ENCODE measurements at regions of chr17 and their contacts with region 1.

Region 1: DNA sequence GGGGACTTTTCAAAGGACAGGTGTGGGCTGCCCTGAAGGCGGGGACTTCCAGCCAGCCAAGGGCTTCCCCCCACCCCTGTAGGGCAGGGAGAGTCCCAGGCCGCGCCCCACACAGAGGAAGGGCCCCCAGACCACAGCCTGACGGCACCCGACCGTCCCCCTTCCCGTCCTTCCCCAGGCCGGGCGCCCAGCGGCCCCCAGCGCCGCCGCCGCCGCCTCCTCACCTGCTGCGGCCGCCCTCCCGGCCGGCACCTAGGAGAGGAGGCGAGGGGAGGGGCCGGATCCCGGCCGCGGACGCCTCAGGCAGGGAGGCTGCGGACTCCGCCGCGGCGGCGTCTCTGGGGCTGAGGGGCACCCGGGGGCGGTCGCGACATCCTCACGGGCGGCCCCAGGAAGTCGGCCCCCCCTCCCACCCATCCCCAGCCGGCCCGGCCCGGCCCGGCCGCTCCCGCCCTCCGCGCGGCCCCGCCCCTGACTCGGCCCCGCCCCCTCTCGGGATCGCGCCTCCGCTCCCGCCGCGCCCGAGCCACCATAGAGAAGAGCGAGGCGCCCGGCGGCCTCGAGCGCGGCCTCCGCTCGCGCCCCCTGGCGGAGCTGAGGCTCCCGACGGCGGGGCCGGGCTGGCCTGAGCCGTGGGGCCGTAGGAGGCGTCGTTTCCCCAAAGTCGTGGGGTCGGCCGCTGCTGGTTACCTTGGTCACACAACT is 25.5 kb upstream of the RFFL start:
- DNase-seq: peak; percentile 93
- ATAC-seq: peak; percentile 80
- H3K4me3 Mint-ChIP-seq: peak overlapping the region; percentile 90
- H3K27ac Mint-ChIP-seq: peak overlapping the region; percentile 94
- H3K4me1 Mint-ChIP-seq: peaks cover 41% of the 10 kb centered on the region
- H3K27me3 Mint-ChIP-seq: no peaks in the 10 kb centered on the region
- CTCF ChIP-seq: peak; percentile 67

Region 2: GRCh38 chr17:34990921-34991365 is 98.1 kb before region 1 on chr17:
- CTCF ChIA-PET with region 1: interaction called, 51 read pairs
- POLR2A ChIA-PET with region 1: interaction called, 5 read pairs
- intact Hi-C with region 1: no loop called
- DNase-seq: no peak
- ATAC-seq: no peak
- H3K4me3 Mint-ChIP-seq: no peak overlapping the region
- H3K27ac Mint-ChIP-seq: peak overlapping the region; percentile 62
- H3K4me1 Mint-ChIP-seq: peaks cover 3% of the 10 kb centered on the region
- H3K27me3 Mint-ChIP-seq: no peaks in the 10 kb centered on the region
- CTCF ChIP-seq: no peak

Region 3: GRCh38 chr17:35022536-35023063 is 66.4 kb before region 1 on chr17:
- CTCF ChIA-PET with region 1: interaction called, 33 read pairs
- POLR2A ChIA-PET with region 1: interaction called, 16 read pairs
- intact Hi-C with region 1: no loop called
- DNase-seq: peak; percentile 88
- ATAC-seq: peak; percentile 100
- H3K4me3 Mint-ChIP-seq: peak overlapping the region; percentile 74
- H3K27ac Mint-ChIP-seq: peak overlapping the region; percentile 99
- H3K4me1 Mint-ChIP-seq: peaks cover 48% of the 10 kb centered on the region
- H3K27me3 Mint-ChIP-seq: no peaks in the 10 kb centered on the region
- CTCF ChIP-seq: no peak

Region 4: GRCh38 chr17:35063514-35064223 is 25.4 kb before region 1 on chr17 and contains the start of gene RFFL:
- CTCF ChIA-PET with region 1: interaction called, 17 read pairs
- POLR2A ChIA-PET with region 1: interaction called, 12 read pairs
- intact Hi-C with region 1: loop called (anchors 2 kb)
- DNase-seq: peak; percentile 96
- ATAC-seq: peak; percentile 98
- H3K4me3 Mint-ChIP-seq: peak within 1 kb of the TSS; percentile 22
- H3K27ac Mint-ChIP-seq: peak within 1 kb of the TSS; percentile 87
- H3K4me1 Mint-ChIP-seq: peaks cover 51% of the 10 kb centered on the region
- H3K27me3 Mint-ChIP-seq: no peaks in the 10 kb centered on the region
- CTCF ChIP-seq: no peak
- total RNA-seq, gene RFFL: 11.3 to 12.0 TPM

Region 5: DNA sequence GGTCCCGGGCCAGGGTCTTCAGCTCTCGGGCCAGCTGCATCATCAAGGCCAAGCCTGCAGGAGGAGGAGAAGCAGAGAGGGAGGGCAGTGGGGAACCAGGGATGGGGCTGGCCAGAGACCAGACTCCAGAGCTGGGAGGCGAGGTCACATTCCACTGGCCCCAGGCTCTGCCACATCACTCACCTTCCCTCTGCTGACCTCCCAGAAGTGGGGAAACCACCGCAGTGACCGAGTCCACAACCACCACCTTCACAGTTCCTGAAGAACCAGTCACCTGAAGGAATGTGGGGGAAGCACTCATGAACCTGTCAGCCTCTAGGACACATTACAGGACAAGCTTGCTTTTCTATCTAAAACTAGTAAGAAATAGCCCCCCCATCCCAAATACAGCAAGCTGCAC is 14.2 kb after region 1 on chr17:
- CTCF ChIA-PET with region 1: interaction called, 12 read pairs
- POLR2A ChIA-PET with region 1: interaction called, 6 read pairs
- intact Hi-C with region 1: no loop called
- DNase-seq: no peak
- ATAC-seq: no peak
- H3K4me3 Mint-ChIP-seq: no peak overlapping the region
- H3K27ac Mint-ChIP-seq: no peak overlapping the region
- H3K4me1 Mint-ChIP-seq: peaks cover 6% of the 10 kb centered on the region
- H3K27me3 Mint-ChIP-seq: no peaks in the 10 kb centered on the region
- CTCF ChIP-seq: no peak

Measured in activated CD8-positive, alpha-beta T cell treated with anti-CD3 and anti-CD28 coated beads for 36 hours (primary cell).